SK-N-SH (cell line): ENCODE measurements at regions of chr20 and their contacts with region 1.

Region 1: GRCh38 chr20:5205348-5206210 is 78.8 kb downstream of the CDS2 start:
- DNase-seq: peak; percentile 83
- H3K4me3 ChIP-seq: no peak overlapping the region; a peak in 1 of 4 replicates
- H3K27ac ChIP-seq: no peak overlapping the region; a peak in 1 of 4 replicates
- H3K4me1 ChIP-seq: peaks cover 0 to 5% of the 10 kb centered on the region in 2 experiments; a peak in 1 of 4 replicates
- H3K27me3 ChIP-seq: no peaks in the 10 kb centered on the region
- CTCF ChIP-seq: peak; percentile 96
- EP300 ChIP-seq: no peak
- RAD21 ChIP-seq: peak; percentile 98

Region 2: GRCh38 chr20:4978050-4978918 is 227.3 kb before region 1 on chr20:
- CTCF ChIA-PET with region 1: no interaction called
- POLR2A ChIA-PET with region 1: no interaction called
- DNase-seq: no peak
- H3K4me3 ChIP-seq: no peak overlapping the region
- H3K27ac ChIP-seq: no peak overlapping the region
- H3K4me1 ChIP-seq: no peaks in the 10 kb centered on the region; a peak in 1 of 4 replicates
- H3K27me3 ChIP-seq: no peaks in the 10 kb centered on the region
- CTCF ChIP-seq: no peak
- EP300 ChIP-seq: no peak
- RAD21 ChIP-seq: no peak

Region 3: DNA sequence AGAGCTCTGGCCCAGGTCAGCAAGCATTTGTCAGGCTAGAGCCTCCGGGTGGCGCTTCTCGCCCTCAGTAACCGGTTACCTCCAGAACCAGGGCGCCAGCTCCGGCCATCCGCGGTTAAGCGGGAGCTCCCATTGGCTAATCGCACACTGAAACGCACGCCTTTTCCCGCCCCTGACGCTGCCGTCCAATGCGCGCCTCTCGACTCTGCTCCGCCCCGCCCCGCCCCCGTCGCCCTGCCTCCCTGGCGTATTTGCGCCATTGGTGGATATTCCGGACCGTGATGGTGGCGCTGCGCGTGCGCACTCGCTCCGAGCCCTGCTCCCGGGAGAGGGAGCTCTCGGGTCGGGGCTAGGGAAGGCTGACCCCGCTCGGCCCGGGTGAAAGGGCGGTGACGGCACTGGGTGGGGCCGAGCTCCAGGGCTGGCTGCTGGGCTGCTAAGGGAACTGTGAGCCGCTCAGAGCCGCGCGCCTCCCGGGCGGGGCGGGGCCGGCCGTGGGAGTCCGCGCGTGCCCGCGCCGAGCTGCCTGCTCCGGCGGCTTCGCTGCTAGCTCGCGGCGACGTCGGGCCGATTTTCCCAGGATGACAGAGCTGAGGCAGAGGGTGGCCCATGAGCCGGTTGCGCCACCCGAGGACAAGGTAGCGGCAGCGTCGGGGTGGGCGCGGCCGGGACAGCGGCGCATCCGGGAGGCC is 78.9 kb before region 1 on chr20 and contains the start of gene CDS2:
- CTCF ChIA-PET with region 1: interaction called, 23 read pairs
- POLR2A ChIA-PET with region 1: no interaction called
- DNase-seq: peak; percentile 99
- H3K4me3 ChIP-seq: peak within 1 kb of the TSS; percentile 78 to 79
- H3K27ac ChIP-seq: peak within 1 kb of the TSS; percentile 70 to 83
- H3K4me1 ChIP-seq: peaks cover 4 to 7% of the 10 kb centered on the region in 2 experiments; a peak in 1 of 4 replicates
- H3K27me3 ChIP-seq: no peaks in the 10 kb centered on the region
- CTCF ChIP-seq: peak; percentile 64
- EP300 ChIP-seq: no peak
- RAD21 ChIP-seq: peak; percentile 71
- polyA plus RNA-seq, gene CDS2: 13.9 and 22.7 TPM in 2 replicates

Region 4: GRCh38 chr20:5222919-5223634 is 17.5 kb after region 1 on chr20:
- CTCF ChIA-PET with region 1: interaction called, 56 read pairs
- POLR2A ChIA-PET with region 1: no interaction called
- DNase-seq: no peak
- H3K4me3 ChIP-seq: no peak overlapping the region; a peak in 1 of 4 replicates
- H3K27ac ChIP-seq: no peak overlapping the region
- H3K4me1 ChIP-seq: no peaks in the 10 kb centered on the region
- H3K27me3 ChIP-seq: no peaks in the 10 kb centered on the region
- CTCF ChIP-seq: peak; percentile 94
- EP300 ChIP-seq: no peak
- RAD21 ChIP-seq: peak; percentile 57

Region 5: DNA sequence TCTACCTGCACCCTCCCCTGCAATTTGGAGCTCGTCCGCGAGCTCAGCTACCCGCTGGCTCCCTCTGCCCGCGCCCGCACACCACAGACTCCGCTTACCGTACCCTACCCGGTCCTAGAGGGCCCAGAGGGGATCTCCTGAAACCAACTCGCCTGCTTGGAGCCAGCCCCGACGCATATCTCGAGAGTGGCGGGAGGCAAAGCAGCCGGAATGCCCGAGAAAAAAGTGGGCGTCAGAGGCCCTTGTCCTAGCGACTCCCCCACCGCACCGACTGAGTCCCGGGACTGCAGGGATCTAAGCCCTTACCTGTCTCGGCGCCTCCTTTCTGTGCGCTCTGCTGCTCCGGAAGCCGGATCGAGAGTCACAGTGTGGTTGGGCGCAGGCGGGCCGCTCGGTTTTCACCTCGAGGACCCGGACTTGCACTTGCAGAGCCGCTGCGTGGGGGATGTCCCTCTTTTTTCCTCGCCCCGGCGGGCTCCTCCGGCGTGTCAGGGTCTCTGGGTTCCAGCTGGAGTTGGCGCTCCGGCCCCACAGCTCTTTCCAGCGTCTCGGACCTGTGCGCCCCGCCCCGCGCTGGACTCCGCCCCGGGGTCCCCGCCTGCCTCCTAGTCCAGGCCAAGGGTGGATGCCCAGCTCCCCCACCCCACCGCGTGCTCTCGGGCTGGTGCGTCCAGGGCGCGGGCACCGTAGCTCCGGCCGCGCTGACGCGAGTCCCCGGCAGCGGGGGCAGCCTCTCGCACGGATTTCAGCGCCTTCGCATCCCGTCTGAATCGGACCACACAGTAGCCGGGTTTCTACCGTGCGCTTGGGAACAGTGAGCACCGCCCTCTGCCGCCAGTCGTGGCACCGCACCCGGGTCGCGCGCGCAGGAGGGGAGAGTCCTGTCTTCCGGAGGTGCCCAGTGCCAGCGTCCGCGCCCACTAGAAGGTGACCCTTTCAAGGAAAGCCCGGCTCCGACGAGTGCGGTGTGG is 110.9 kb after region 1 on chr20 and contains the start of gene PROKR2:
- CTCF ChIA-PET with region 1: interaction called, 100 read pairs
- POLR2A ChIA-PET with region 1: no interaction called
- DNase-seq: peak; percentile 88
- H3K4me3 ChIP-seq: peak within 1 kb of the TSS in 1 of 2 experiments; percentile 46; a peak in 2 of 4 replicates
- H3K27ac ChIP-seq: peak within 1 kb of the TSS in 1 of 2 experiments; percentile 71; a peak in 1 of 4 replicates
- H3K4me1 ChIP-seq: peaks cover 0 to 40% of the 10 kb centered on the region in 2 experiments; a peak in 1 of 4 replicates
- H3K27me3 ChIP-seq: peaks cover 14% of the 10 kb centered on the region
- CTCF ChIP-seq: no peak
- EP300 ChIP-seq: no peak
- RAD21 ChIP-seq: peak; percentile 58
- polyA plus RNA-seq, gene PROKR2: 0.13 and 0.44 TPM in 2 replicates

Region 6: DNA sequence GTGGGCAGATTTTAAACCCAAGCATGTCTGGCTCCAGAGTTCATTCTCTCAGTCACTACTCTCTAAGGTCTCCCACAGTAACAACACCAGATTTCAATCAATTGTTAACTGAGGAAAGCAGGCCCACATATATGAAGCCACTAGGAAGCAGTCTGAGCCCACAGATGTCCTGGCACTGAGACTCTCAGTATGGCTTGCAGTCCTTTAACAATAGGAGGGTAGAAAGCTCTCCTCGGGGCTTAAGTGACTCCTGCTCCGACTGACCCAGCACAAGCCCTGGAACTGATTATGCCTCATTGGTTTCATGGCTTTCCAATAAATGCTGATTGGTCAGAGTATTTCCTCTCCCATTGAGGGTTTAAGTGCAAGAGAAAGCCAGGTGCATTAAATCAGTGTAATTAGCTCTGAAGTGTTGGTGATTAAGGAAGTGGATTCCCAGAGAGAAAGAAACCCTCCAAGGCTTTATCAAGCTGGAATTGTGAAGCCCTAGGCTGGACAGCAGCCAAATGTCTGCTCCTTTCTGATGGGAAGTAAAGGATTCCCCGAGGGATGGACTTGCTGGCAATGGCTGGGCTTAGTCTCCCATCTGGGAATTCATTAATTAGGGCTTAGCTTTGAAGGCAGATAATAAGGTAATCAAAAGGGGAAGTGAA is 187.8 kb after region 1 on chr20:
- CTCF ChIA-PET with region 1: interaction called, 33 read pairs
- POLR2A ChIA-PET with region 1: no interaction called
- DNase-seq: peak; percentile 45
- H3K4me3 ChIP-seq: no peak overlapping the region
- H3K27ac ChIP-seq: peak overlapping the region in 1 of 2 experiments; percentile 95; a peak in 2 of 4 replicates
- H3K4me1 ChIP-seq: peaks cover 0 to 28% of the 10 kb centered on the region in 2 experiments; a peak in 2 of 4 replicates
- H3K27me3 ChIP-seq: no peaks in the 10 kb centered on the region
- CTCF ChIP-seq: no peak
- EP300 ChIP-seq: peak in 1 of 2 experiments; percentile 95; a peak in 2 of 4 replicates
- RAD21 ChIP-seq: peak; percentile 82

Region 7: DNA sequence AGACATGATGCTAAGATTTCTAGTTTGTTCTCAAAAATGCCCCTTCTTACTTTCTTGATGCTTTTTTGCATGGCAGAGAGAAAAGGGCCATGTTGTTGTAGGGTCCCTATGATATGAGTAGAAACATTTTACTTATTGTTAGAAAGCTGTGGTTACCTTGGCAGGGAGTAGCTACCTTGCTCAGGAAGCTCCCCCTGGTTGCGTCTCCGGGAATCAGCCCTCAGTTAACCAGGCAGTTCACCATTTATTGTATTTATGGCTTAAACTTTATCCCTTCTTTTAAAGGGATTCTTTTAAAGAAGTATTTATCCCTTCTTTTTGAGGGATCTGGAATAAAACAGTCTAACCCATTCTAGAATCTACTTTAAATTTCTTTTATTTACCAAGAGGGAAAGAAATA is 225.1 kb after region 1 on chr20:
- CTCF ChIA-PET with region 1: interaction called, 10 read pairs
- POLR2A ChIA-PET with region 1: no interaction called
- DNase-seq: no peak
- H3K4me3 ChIP-seq: no peak overlapping the region
- H3K27ac ChIP-seq: no peak overlapping the region
- H3K4me1 ChIP-seq: peaks cover 0 to 6% of the 10 kb centered on the region in 2 experiments; a peak in 1 of 4 replicates
- H3K27me3 ChIP-seq: no peaks in the 10 kb centered on the region
- CTCF ChIP-seq: no peak
- EP300 ChIP-seq: no peak
- RAD21 ChIP-seq: peak; percentile 22

Region 8: DNA sequence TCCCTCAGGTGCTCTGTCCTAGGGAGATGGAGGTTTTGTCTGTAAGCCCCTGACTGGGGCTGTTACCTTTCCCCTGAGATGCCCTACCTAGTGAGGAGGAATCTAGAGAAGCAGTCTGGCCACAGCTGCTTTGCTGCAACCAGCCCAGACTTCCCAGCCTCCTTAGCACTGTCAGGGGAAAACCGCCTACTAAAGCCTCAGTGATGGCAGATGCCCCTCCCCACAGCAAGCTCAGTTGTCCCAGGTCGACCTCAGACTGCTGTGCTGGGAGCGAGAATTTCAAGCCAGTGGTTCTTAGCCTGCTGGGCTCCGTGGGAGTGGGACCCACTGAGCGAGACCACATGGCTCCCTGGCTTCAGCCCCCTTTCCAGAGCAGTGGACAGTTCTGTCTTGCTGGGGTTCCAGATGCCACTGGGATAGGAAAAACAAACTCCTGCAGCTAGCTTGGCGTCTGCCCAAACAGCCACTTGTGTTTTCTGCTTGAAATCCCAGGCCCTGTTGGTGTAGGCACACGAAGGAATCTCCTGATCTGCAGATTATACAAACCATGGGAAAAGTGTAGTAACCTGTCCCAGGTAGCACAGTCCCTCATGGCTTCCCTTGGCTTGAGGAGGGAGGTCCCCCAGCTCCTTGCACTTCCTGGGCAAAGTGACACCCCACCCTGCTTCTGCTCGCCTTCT is 257.6 kb after region 1 on chr20:
- CTCF ChIA-PET with region 1: interaction called, 14 read pairs
- POLR2A ChIA-PET with region 1: no interaction called
- DNase-seq: no peak
- H3K4me3 ChIP-seq: no peak overlapping the region
- H3K27ac ChIP-seq: no peak overlapping the region; a peak in 1 of 4 replicates
- H3K4me1 ChIP-seq: peaks cover 0 to 10% of the 10 kb centered on the region in 2 experiments; a peak in 1 of 4 replicates
- H3K27me3 ChIP-seq: no peaks in the 10 kb centered on the region
- CTCF ChIP-seq: no peak
- EP300 ChIP-seq: no peak
- RAD21 ChIP-seq: no peak